ENCODE measurements at regions of chr20 and their contacts with region 1.

Region 1: GRCh38 chr20:18496740-18497592 is at the start of gene RBBP9:
- DNase-seq: peak; percentile 86
- ATAC-seq: peak; percentile 99
- H3K4me3 Mint-ChIP-seq: peak within 1 kb of the TSS; percentile 99
- H3K27ac Mint-ChIP-seq: peak within 1 kb of the TSS; percentile 90
- H3K4me1 Mint-ChIP-seq: peaks cover 11% of the 10 kb centered on the region
- H3K27me3 Mint-ChIP-seq: no peaks in the 10 kb centered on the region
- CTCF ChIP-seq: no peak
- total RNA-seq, gene RBBP9: 15.8 to 17.5 TPM

Region 2: GRCh38 chr20:18404172-18404571 is 92.8 kb before region 1 on chr20:
- CTCF ChIA-PET with region 1: no interaction called
- POLR2A ChIA-PET with region 1: no interaction called
- intact Hi-C with region 1: no loop called
- DNase-seq: no peak
- ATAC-seq: no peak
- H3K4me3 Mint-ChIP-seq: no peak overlapping the region
- H3K27ac Mint-ChIP-seq: no peak overlapping the region
- H3K4me1 Mint-ChIP-seq: no peaks in the 10 kb centered on the region
- H3K27me3 Mint-ChIP-seq: no peaks in the 10 kb centered on the region
- CTCF ChIP-seq: no peak

Region 3: DNA sequence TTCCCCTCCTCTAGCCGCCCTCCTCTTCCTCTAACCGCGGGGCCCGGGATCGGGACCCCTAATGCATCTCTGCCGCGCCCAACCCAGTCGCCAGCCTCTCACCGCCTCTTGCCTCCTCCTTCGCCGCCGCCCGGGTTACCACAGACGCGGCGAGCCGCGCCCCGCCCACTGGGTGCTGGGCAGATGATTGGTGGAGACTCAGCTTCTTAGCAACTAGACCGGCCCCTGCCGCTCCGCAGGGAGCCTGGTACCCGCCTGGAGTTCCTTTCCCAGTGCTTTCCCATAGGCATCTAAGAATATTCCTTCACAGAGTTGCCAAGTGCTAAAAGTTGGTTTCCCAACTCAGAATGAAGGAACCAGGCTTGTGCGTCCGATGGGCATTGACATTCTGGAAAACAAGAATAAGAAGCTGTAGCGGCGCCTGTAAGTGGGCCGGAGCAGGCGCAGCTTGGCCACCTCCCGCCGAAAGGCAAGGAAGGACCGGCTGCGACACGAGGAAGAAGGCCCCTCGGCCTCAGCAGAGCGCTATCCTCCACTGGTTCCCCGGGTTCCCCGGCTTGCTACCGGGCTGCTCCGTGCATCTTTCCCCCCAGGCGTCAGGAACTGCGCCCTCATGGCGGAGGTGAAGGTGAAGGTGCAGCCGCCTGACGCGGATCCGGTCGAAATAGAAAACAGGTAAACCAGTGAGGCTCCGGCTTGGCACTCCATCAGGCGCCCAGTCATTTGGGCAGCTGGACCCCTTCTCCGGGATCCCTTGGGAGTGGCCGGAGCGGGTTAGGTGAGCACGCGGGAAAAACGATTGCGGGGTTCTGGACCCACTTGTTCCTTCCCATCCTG is 29.9 kb before region 1 on chr20 and contains the starts of genes DZANK1 and POLR3F:
- CTCF ChIA-PET with region 1: interaction called, 6 read pairs
- POLR2A ChIA-PET with region 1: interaction called, 11 read pairs
- intact Hi-C with region 1: no loop called
- DNase-seq: peak; percentile 96
- ATAC-seq: peak; percentile 98
- H3K4me3 Mint-ChIP-seq: peak within 1 kb of the TSS; percentile 91
- H3K27ac Mint-ChIP-seq: peak within 1 kb of the TSS; percentile 91
- H3K4me1 Mint-ChIP-seq: peaks cover 18% of the 10 kb centered on the region
- H3K27me3 Mint-ChIP-seq: no peaks in the 10 kb centered on the region
- CTCF ChIP-seq: no peak
- total RNA-seq, gene DZANK1: 1.4 to 1.8 TPM
- total RNA-seq, gene POLR3F: 8.8 to 10.1 TPM